GM18951 (cell line): ENCODE measurements at regions of chr11 and their contacts with region 1.

Region 1: GRCh38 chr11:122633219-122633829 is 22.2 kb upstream of the UBASH3B start:
- POLR2A ChIP-seq: no peak

Region 2: DNA sequence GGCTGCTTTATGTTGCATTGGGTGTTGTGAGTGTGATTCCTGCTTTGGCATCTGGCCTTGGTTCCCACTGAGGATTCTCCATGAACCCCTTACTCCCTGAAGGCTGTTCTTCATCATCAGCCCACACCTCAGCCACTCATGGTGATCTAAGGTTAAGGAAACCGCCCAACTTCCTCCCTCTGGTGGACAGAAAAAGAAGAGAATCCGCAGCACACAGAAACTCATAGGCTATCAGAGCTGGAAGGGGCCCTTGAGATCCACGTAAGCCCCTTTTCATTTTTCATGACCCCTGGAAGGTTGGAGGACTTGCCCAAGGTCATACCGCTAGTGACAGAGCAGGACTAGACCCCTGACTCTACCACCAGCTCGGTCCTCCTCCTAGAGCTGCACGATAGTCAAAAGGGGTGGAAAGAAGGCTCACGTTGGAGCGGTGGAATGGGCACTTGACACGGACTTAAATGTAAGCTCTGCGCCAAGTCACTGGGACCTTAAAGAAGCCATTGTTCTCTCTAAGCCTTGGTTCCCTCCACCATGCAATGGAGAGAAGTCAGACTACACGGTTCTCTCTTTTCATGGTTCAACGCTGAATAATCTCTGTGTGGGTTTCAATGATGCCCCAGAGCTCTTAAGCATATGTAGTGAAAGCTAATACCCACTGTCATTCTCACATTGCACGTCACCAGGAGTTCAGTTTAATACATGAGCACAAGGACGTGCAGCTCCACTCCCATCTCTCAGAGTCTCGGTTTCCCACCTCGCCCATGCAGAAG is 121.4 kb after region 1 on chr11:
- in situ Hi-C with region 1: loop called (anchors 10 kb)
- POLR2A ChIP-seq: no peak

Region 3: DNA sequence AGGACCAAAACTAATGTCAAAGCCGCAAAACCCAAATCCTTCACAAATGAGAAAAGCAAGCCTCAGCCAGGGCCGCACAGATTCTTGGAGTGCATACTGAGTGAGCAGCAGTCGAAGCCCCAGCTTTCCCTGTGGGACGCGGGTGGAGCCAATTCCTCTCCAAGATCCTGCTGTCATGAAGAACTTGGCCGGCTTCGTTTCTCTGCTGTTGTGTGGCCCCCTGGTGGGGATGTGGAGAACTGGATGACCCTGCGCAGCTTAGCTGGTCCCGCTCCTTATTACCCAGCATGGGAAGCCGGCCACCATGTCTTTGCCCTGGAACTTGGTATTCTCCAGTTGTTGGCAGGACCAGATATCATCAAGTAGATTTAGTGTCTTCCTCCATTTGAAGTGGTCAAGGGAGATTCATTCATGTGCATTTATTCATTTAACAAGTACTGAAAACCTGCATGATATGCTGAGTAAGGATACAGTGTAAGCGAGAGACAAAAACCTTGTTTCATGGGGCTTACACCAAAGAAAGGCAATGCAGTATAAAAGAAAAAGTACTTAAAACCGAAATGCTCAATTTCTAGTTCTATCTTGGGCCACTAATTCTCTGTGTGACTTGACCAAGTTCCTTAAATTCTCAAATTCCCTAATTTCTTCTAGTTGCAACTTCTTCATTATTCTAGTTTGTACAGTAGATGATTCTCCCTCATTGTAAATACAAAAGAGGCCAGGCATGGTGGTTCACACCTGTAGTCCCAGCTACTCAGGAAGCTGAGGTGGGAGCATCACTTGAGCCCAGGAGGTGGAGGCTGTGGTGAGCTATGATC is 148.3 kb after region 1 on chr11:
- in situ Hi-C with region 1: loop called (anchors 10 kb)
- POLR2A ChIP-seq: no peak

Region 4: DNA sequence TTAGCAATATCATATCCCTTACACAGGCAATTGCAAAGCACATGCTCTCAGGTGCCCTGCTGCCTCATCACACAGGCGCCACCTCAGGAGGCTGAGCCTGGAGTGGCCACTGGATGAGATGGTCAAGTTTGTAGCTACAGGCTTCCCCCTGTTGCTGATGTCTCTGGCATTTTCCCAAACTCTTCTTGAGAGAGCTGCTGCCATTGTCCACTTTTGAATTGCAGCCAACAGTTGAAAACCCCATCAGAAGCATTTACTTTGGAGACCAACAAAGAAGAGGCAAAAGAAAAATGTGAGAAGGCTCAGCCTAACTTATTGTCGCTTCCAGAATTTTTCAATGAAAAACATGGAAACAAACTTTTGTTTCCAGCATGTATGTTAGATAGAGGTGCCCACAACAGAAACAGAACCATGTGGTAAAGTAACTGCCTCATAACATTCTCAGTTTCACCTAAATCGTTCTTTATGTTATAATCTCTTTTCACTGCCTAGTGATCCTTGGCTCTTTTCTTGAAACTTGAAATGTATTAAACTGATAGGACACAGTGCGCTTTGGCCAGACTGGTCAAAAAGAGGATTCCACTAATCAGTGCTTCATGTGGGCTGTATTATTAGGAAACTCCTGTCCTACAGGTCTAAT is 1859.8 kb after region 1 on chr11:
- in situ Hi-C with region 1: no loop called
- POLR2A ChIP-seq: no peak